SK-N-SH (cell line): ENCODE measurements at regions of chr5 and their contacts with region 1.

Region 1: DNA sequence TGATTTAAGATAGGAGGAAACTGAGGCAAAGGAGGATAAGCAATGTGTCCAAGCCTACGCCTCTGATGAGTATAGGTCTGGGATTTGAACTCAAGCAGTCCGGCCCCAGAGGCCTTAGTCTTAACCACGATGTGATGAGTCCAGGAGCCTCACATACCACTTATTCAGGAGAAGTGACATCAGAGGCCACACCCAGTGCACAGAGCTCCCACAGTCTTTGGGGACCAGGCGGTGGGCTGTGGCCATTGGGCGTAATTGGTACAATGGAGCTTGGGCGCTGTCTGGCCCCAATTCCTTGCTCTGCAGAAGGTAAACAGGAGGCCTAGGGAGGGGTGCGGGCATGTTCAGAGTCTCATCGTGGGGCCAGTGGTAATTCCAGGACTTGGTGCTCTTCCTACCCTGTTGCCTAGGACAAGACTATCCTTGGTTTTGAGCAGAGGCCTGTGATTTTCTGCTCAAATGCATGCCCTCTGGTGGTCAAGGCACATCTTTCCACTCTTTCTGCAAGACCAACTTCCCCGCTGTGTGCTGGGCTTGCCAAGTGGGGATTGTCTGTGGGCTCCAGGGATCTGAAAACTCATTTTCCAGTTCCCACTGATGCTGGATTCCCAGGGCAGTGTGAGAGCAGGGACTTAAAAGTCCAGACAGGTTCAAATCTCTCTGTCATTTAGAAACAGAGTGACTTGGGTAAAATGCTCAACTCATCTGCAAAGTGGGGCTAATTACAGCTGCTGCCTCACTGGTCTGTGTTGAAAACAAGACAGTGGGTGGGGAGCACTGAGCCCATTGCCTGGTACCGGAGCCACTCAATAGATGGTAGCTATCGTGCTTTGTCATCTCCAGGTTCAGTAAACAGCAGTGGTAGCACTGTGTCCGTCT is 15.8 kb downstream of the NDST1 start:
- DNase-seq: peak; percentile 79
- H3K4me3 ChIP-seq: no peak overlapping the region; a peak in 1 of 4 replicates
- H3K27ac ChIP-seq: peak overlapping the region in 1 of 2 experiments; percentile 7; a peak in 1 of 4 replicates
- H3K4me1 ChIP-seq: peaks cover 0 to 11% of the 10 kb centered on the region in 2 experiments; a peak in 1 of 4 replicates
- H3K27me3 ChIP-seq: no peaks in the 10 kb centered on the region
- CTCF ChIP-seq: peak; percentile 74
- EP300 ChIP-seq: no peak
- RAD21 ChIP-seq: peak; percentile 78

Region 2: GRCh38 chr5:150486402-150487198 is 37.1 kb before region 1 on chr5:
- CTCF ChIA-PET with region 1: interaction called, 15 read pairs
- POLR2A ChIA-PET with region 1: no interaction called
- DNase-seq: peak; percentile 87
- H3K4me3 ChIP-seq: peak overlapping the region; percentile 86 to 89
- H3K27ac ChIP-seq: peak overlapping the region; percentile 80 to 92
- H3K4me1 ChIP-seq: peaks cover 38 to 52% of the 10 kb centered on the region in 2 experiments
- H3K27me3 ChIP-seq: no peaks in the 10 kb centered on the region
- CTCF ChIP-seq: no peak
- EP300 ChIP-seq: no peak
- RAD21 ChIP-seq: no peak

Region 3: GRCh38 chr5:150503977-150504620 is 19.6 kb before region 1 on chr5:
- CTCF ChIA-PET with region 1: interaction called, 11 read pairs
- POLR2A ChIA-PET with region 1: no interaction called
- DNase-seq: peak; percentile 83
- H3K4me3 ChIP-seq: no peak overlapping the region
- H3K27ac ChIP-seq: peak overlapping the region in 1 of 2 experiments; percentile 97; a peak in 2 of 4 replicates
- H3K4me1 ChIP-seq: peaks cover 0 to 81% of the 10 kb centered on the region in 2 experiments; a peak in 3 of 4 replicates
- H3K27me3 ChIP-seq: no peaks in the 10 kb centered on the region
- CTCF ChIP-seq: no peak
- EP300 ChIP-seq: peak in 1 of 2 experiments; percentile 71; a peak in 2 of 4 replicates
- RAD21 ChIP-seq: peak; percentile 42

Region 4: GRCh38 chr5:150511578-150512367 is 11.9 kb before region 1 on chr5:
- CTCF ChIA-PET with region 1: interaction called, 14 read pairs
- POLR2A ChIA-PET with region 1: interaction called, 3 read pairs
- DNase-seq: peak; percentile 70
- H3K4me3 ChIP-seq: no peak overlapping the region
- H3K27ac ChIP-seq: peak overlapping the region in 1 of 2 experiments; percentile 81; a peak in 2 of 4 replicates
- H3K4me1 ChIP-seq: peaks cover 40 to 82% of the 10 kb centered on the region in 2 experiments
- H3K27me3 ChIP-seq: no peaks in the 10 kb centered on the region
- CTCF ChIP-seq: no peak
- EP300 ChIP-seq: no peak
- RAD21 ChIP-seq: no peak

Region 5: GRCh38 chr5:150534811-150535210 is 11.1 kb after region 1 on chr5:
- CTCF ChIA-PET with region 1: interaction called, 11 read pairs
- POLR2A ChIA-PET with region 1: no interaction called
- DNase-seq: no peak
- H3K4me3 ChIP-seq: no peak overlapping the region
- H3K27ac ChIP-seq: no peak overlapping the region
- H3K4me1 ChIP-seq: no peaks in the 10 kb centered on the region
- H3K27me3 ChIP-seq: no peaks in the 10 kb centered on the region
- CTCF ChIP-seq: no peak
- EP300 ChIP-seq: no peak
- RAD21 ChIP-seq: no peak

Region 6: DNA sequence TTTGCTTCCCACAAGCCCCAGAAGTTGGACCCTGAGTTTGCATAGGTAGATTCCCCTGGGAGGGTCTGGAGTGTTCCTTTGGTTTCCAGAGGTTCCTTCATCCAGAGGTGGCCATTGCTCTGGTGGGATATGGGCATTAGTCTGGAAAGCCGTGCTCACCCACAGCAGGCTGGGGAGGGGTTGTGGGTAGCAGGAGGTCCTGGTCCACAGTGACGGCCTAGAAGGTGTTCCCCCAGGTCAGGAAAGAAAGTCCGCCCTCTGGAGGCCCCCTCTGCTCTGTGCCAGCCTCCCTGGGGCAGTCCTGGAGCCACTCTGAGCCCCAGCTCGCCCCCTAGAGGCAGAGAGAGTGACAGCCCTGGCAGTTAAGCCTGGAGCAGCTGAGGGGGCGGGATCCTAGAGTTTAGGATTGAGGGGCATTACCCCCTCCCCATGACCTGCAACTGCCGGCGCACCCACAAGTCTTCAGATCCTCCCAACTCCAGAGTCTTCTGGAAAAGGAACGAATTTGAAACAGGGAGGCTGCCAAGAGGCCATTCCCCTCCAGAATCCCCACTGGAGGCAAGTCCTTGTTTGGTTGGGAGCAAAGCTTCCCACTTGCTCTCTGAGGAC is 21.0 kb after region 1 on chr5:
- CTCF ChIA-PET with region 1: interaction called, 19 read pairs
- POLR2A ChIA-PET with region 1: no interaction called
- DNase-seq: peak; percentile 90
- H3K4me3 ChIP-seq: no peak overlapping the region
- H3K27ac ChIP-seq: peak overlapping the region in 1 of 2 experiments; percentile 70; a peak in 2 of 4 replicates
- H3K4me1 ChIP-seq: peaks cover 4 to 30% of the 10 kb centered on the region in 2 experiments; a peak in 3 of 4 replicates
- H3K27me3 ChIP-seq: no peaks in the 10 kb centered on the region
- CTCF ChIP-seq: peak; percentile 63
- EP300 ChIP-seq: no peak
- RAD21 ChIP-seq: peak; percentile 64